GM10248 (cell line): ENCODE measurements at regions of chr1 and their contacts with region 1.

Region 1: DNA sequence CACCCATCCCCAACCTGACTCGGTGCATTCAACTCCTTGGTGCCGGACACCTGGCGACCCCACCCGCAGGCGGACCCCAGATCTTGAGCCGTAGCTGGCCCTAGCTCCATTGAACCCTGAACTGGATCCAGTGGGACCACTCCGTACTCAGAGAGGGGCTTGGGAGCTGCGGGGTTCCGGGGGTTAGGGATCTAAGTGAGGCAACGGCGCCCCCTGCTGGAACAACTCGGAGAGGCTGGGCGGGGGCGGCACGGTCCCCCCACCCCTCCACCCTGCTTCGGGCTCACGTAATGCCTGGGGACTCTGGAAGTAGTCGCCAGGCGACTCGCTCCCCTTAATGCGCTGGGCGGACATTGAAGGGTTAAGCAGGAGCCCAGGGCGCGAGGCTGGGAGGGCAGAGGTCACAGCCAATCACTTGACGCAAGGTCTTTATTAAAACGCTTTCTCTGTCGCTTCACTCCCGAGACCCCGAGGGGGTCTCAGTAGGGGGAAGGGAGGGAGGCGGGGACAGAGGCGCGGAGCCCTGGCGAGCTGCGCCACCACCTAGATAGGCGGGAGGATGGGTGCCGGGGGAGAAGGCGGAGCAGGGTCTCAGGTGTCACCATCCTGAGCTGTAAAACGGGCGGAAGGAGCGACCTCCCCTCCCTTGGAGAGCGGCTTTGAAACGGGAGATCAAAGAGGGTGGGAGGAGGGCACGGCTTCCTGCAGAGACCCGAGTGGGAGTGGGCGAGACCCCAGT is 704 bp upstream of the CRABP2 start:
- DNase-seq: peak; percentile 88
- CTCF ChIP-seq: peak; percentile 67

Region 2: GRCh38 chr1:156717275-156717805 is 11.3 kb after region 1 on chr1:
- CTCF ChIA-PET with region 1: interaction called, 44 read pairs
- POLR2A ChIA-PET with region 1: no interaction called
- DNase-seq: no peak
- CTCF ChIP-seq: no peak

Region 3: DNA sequence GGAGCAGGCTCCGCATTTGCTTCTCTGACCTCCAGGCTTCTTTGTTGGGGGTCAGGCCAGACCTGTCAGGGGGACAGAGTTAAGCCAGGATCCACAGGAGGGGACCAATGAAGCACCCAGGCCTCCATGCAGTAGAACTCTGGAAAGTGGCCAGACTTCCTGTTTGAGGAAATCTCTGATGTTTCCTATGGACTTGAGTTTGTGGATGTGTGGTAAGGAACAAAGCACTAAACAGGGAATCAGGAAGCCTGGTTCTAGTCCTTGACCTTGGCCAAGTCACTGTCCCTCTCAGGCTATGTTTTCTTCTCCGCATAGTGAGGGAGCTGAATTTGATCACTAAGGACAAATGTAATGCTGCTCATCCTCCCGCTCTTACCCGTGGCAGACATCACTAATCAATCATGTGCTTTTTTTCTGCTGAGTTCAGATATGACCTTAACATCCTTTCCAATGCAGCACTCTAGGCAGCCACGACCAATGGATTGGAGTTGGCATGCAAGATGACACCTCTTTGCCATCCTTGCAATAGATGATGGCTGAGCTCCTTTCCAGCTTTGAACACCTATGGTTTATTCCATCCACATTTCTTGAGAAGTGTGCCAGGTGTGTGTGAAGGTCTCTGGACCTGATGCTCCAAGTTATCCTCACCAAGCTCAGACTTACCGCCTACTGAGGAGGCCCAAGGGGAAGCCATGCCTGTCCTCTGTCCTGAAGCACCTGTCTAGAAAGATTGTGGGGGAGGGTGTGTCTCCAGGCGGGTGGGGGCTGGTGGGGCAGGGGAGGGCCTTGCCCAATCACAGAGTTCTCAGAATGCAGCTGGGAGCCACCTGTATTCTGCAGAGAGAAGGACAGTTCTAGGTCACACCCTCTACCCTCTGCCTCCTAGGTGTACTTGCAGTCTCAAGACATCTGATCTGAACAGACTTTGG is 100.7 kb after region 1 on chr1:
- CTCF ChIA-PET with region 1: no interaction called
- POLR2A ChIA-PET with region 1: no interaction called
- DNase-seq: no peak
- CTCF ChIP-seq: no peak

Region 4: DNA sequence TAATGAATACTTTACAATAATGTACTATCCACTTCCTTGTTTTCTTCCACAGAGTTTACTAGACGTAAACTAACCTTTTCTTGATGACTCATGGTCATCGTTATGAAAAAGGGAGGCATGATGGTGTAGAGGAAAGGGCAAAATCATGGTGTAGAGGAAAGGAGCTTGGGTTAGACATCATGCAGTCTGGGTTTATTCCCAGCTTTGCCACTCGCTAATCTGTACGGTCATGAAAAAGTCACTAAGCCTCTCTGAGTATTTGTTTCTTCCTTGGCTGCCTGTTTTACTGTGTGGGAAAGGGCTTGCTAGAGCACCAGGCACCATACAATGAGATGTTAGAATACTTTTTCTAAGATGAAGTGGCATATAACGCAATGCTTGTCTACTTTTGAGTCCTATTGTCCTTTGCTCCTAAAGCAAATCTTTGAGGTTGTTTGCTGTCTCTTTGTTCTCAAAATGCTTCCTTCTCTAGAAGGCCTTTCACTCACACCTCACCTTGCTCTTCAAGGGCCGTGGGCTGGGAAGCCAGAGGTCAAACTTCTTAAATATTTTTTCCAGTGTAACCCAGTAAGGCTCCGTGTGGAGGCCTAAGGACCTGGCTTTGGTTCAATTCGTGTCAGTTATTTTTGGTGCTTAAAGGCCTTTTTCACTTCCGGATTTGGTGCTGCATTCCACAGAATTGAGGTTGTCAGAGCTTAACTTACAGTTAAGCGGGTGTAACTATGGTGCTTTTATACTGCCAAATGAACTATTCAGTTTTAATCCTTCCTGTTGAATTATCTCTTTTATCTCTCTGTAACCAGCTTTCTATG is 442.0 kb after region 1 on chr1:
- CTCF ChIA-PET with region 1: no interaction called
- POLR2A ChIA-PET with region 1: no interaction called
- DNase-seq: no peak
- CTCF ChIP-seq: no peak